ENCODE measurements at regions of chr14 and their contacts with region 1.

Region 1: DNA sequence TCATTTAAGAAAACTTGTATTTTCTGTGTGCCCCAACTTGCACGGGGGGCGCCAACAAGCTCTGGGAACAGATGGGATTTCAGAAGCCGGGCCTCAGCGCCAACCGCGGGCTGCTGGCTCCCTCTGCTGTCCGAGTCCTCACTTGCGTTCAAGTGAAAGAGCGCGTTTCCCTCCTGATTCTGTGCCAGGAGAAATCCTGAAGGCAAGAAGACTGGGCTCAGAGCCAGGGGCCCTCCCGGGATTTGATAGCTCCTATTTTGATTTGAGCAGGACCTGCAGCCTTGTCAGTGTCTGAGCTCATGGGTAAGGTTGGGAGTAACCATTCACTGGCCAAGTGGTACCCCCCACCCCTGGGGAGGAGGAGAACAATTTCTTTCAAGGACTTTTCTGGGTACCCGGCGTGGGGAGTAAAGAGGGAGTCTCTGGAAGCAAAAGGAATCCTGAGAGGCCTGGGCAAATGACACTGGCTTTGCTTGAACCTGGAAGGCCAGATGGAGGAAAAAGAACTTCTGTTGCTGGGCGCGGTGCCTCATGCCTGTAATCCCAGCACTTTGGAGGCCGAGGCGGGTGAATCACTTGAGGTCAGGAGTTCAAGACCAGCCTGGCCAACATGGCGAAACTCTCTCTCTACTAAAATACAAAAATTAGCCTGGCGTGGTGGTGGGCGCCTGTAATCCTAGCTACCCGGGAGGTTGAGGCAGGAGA is 179.0 kb upstream of the RGS6 start:
- DNase-seq: peak; percentile 91
- ATAC-seq: peak; percentile 88
- H3K4me3 ChIP-seq: peak overlapping the region in 1 of 2 experiments; percentile 15; a peak in 2 of 4 replicates
- H3K27ac ChIP-seq: peak overlapping the region; percentile 38
- H3K4me1 ChIP-seq: peaks cover 18 to 24% of the 10 kb centered on the region in 2 experiments
- H3K27me3 ChIP-seq: no peaks in the 10 kb centered on the region
- CTCF ChIP-seq: peak; percentile 87 to 98 (median 96)
- POLR2A ChIP-seq: no peak
- RAD21 ChIP-seq: peak; percentile 99

Region 2: GRCh38 chr14:70821584-70822529 is 931.4 kb before region 1 on chr14:
- CTCF ChIA-PET with region 1: interaction called, 5 read pairs
- POLR2A ChIA-PET with region 1: no interaction called
- RAD21 ChIA-PET with region 1: no interaction called
- intact Hi-C with region 1: loop called (anchors 10 kb)
- DNase-seq: no peak
- ATAC-seq: peak; percentile 63
- H3K4me3 ChIP-seq: peak overlapping the region; percentile 52 to 73
- H3K27ac ChIP-seq: peak overlapping the region; percentile 8; the same call in 1 of the 2 replicates
- H3K4me1 ChIP-seq: peaks cover 10 to 24% of the 10 kb centered on the region in 2 experiments; a peak in 3 of 4 replicates
- H3K27me3 ChIP-seq: no peaks in the 10 kb centered on the region
- CTCF ChIP-seq: no peak
- POLR2A ChIP-seq: no peak
- RAD21 ChIP-seq: no peak

Region 3: DNA sequence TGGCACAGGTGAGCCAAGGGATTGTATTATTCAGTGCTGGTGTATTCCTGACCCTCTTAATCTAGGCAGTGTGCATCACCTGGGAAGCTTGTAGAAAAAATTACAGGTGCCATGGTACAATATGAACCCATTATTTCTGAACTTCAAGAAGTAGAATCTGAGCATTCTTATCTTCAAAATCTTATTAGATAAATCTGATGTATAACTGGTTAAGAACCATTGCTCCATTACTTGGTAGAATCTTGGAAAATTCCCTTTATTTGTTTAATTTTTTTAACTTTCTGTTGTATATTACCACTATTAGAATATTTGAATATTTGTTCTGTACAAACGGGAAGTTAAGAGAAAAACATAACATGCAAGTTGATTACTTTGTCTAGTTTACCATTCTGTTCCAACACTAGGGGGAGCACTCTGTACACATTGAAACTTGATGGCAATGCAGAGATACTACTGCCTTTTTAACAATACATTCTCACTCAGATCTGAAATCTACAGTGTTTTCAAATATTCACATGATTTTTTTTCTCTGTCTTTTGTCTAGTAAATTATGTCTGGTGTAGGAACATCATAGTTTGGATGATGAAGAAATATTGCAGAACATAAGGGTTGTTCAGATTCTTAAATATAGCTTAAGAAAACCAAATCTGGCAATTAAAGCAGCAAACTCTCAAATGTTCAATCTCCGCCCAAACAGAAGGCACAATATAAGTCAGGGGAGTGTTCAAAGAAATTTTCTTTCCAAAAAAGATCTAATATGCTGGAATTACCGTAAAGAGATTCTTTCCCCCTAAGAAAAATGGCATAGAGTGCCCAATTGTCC is 649.4 kb before region 1 on chr14:
- CTCF ChIA-PET with region 1: interaction called, 13 read pairs
- POLR2A ChIA-PET with region 1: no interaction called
- RAD21 ChIA-PET with region 1: interaction called in 1 of 2 experiments, 6 read pairs
- intact Hi-C with region 1: loop called (anchors 1 kb)
- DNase-seq: peak; percentile 41
- ATAC-seq: peak; percentile 54; the same call in 1 of the 2 replicates
- H3K4me3 ChIP-seq: no peak overlapping the region
- H3K27ac ChIP-seq: no peak overlapping the region
- H3K4me1 ChIP-seq: peaks cover 0 to 11% of the 10 kb centered on the region in 2 experiments; a peak in 2 of 4 replicates
- H3K27me3 ChIP-seq: no peaks in the 10 kb centered on the region
- CTCF ChIP-seq: peak; percentile 43 to 88 (median 86); a peak in 5 of 6 replicates
- POLR2A ChIP-seq: no peak
- RAD21 ChIP-seq: peak; percentile 69

Region 4: GRCh38 chr14:71320107-71320733 is 433.1 kb before region 1 on chr14:
- CTCF ChIA-PET with region 1: interaction called, 4 read pairs
- POLR2A ChIA-PET with region 1: no interaction called
- RAD21 ChIA-PET with region 1: no interaction called
- intact Hi-C with region 1: loop called (anchors 5 kb)
- DNase-seq: peak; percentile 95
- ATAC-seq: peak; percentile 91
- H3K4me3 ChIP-seq: peak within 1 kb of the TSS; percentile 81 to 92
- H3K27ac ChIP-seq: peak within 1 kb of the TSS; percentile 93
- H3K4me1 ChIP-seq: peaks cover 18 to 25% of the 10 kb centered on the region in 2 experiments
- H3K27me3 ChIP-seq: no peaks in the 10 kb centered on the region
- CTCF ChIP-seq: no peak
- POLR2A ChIP-seq: peak; percentile 46
- RAD21 ChIP-seq: no peak

Region 5: DNA sequence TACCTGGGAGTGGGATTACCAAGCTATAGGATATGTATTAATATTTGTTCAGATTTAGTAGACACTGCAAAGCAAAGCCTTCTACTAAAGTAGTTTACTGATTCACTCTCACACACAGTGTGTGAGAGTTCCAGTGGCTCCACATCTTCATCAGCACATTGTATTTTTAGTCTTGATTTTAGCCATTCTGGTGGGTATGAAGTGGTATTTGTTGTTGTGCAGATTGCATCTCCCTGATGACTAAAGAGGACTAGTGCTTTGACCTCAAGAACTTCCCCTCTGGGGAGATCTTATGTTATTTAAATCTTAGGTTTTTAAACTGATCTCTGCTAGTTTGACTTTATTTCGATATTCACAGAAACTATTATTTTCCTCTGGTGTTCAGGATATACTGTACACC is 300.7 kb before region 1 on chr14:
- CTCF ChIA-PET with region 1: no interaction called
- POLR2A ChIA-PET with region 1: no interaction called
- RAD21 ChIA-PET with region 1: no interaction called
- intact Hi-C with region 1: no loop called
- DNase-seq: no peak
- ATAC-seq: no peak
- H3K4me3 ChIP-seq: no peak overlapping the region
- H3K27ac ChIP-seq: no peak overlapping the region
- H3K4me1 ChIP-seq: no peaks in the 10 kb centered on the region
- H3K27me3 ChIP-seq: no peaks in the 10 kb centered on the region
- CTCF ChIP-seq: no peak
- POLR2A ChIP-seq: no peak
- RAD21 ChIP-seq: no peak

Region 6: DNA sequence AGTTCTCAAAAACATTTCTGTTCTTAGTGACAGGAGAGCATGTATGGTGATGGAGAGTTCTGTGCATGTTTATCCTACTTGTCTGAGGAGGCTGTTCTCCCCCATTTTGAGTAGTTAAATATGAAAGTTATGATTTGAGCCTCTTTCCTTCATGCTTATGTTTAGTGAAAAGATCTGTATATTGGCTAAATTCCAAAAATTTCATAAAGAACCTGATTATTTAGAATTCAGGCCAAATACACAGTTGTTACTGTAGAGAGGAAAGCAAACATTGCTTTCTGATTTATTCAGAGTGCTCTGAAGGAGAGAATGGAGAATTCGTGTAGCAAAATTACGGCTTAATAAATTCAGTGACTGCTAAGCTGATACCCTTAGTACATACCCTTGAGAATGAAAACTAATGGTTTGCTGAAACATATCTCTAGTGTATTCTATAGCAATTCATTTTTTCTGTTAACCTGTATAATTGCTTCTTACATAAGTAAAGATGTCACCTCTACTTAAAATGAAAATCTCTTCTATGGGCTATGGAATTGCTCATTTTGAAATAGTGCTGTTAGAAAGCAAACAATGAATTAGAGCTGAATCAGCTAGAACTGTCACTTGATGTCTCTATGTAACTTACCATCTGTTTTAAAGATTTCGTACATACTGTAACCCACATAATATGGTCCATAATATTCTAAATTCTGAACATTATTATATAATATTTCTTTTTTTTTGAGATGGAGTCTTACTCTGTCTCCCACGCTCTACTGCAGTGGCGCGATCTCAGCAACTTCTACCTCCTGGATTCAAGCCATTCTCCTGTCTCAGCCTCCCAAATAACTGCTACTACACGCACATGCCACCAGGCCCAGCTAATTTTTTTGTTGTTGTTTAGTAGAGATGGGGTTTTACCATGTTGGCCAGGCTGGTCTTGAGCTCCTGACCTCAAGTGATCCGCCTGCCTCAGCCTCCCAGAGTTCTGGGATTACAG is 238.0 kb before region 1 on chr14:
- CTCF ChIA-PET with region 1: no interaction called
- POLR2A ChIA-PET with region 1: no interaction called
- RAD21 ChIA-PET with region 1: no interaction called
- intact Hi-C with region 1: no loop called
- DNase-seq: no peak
- ATAC-seq: no peak
- H3K4me3 ChIP-seq: no peak overlapping the region
- H3K27ac ChIP-seq: no peak overlapping the region
- H3K4me1 ChIP-seq: no peaks in the 10 kb centered on the region
- H3K27me3 ChIP-seq: no peaks in the 10 kb centered on the region
- CTCF ChIP-seq: no peak
- POLR2A ChIP-seq: no peak
- RAD21 ChIP-seq: no peak

Region 7: GRCh38 chr14:71855399-71856036 is 102.2 kb after region 1 on chr14:
- CTCF ChIA-PET with region 1: interaction called, 5 read pairs
- POLR2A ChIA-PET with region 1: no interaction called
- RAD21 ChIA-PET with region 1: interaction called, 4 to 5 read pairs
- intact Hi-C with region 1: loop called (anchors 10 kb)
- DNase-seq: peak; percentile 46
- ATAC-seq: peak; percentile 83
- H3K4me3 ChIP-seq: no peak overlapping the region
- H3K27ac ChIP-seq: no peak overlapping the region
- H3K4me1 ChIP-seq: no peaks in the 10 kb centered on the region
- H3K27me3 ChIP-seq: no peaks in the 10 kb centered on the region
- CTCF ChIP-seq: peak; percentile 55 to 91 (median 77); a peak in 5 of 6 replicates
- POLR2A ChIP-seq: no peak
- RAD21 ChIP-seq: peak; percentile 73

Region 8: GRCh38 chr14:72154723-72155633 is 401.7 kb after region 1 on chr14:
- CTCF ChIA-PET with region 1: no interaction called
- POLR2A ChIA-PET with region 1: no interaction called
- RAD21 ChIA-PET with region 1: no interaction called
- intact Hi-C with region 1: no loop called
- DNase-seq: no peak
- ATAC-seq: no peak
- H3K4me3 ChIP-seq: no peak overlapping the region
- H3K27ac ChIP-seq: no peak overlapping the region
- H3K4me1 ChIP-seq: no peaks in the 10 kb centered on the region
- H3K27me3 ChIP-seq: no peaks in the 10 kb centered on the region
- CTCF ChIP-seq: no peak
- POLR2A ChIP-seq: no peak
- RAD21 ChIP-seq: no peak